ENCODE measurements at regions of chr5 and their contacts with region 1.

Region 1: GRCh38 chr5:131589510-131590348 is 45.3 kb downstream of the RAPGEF6 start:
- DNase-seq: peak; percentile 58 to 66
- H3K4me3 ChIP-seq: no peak overlapping the region
- H3K4me3 Mint-ChIP-seq: no peak overlapping the region
- H3K27ac Mint-ChIP-seq: peak overlapping the region; percentile 61
- H3K4me1 ChIP-seq: peaks cover 10% of the 10 kb centered on the region
- H3K4me1 Mint-ChIP-seq: peaks cover 18% of the 10 kb centered on the region
- H3K27me3 ChIP-seq: no peaks in the 10 kb centered on the region
- H3K27me3 Mint-ChIP-seq: no peaks in the 10 kb centered on the region
- CTCF ChIP-seq: peak; percentile 77 to 82

Region 2: DNA sequence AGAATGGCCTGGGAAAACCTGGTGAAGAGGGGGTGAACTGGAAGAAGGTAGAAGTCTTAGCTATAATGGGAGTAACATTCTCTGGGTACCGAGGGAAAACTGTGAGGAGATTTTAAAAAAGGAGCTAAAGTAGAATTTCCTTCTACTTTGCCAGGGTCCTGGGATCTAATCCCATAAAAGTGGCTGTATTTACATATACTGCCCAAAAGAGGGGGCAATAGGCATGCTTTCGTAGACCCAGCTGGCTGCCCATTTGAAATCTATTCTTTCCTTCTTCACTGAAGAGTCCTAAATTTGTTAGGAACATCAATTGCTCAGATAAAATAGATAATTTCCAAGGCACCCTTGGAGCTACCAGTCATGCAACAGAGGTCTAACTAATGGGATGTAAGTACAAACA is 166.7 kb before region 1 on chr5:
- CTCF ChIA-PET with region 1: interaction called, 4 read pairs
- POLR2A ChIA-PET with region 1: no interaction called
- intact Hi-C with region 1: loop called (anchors 1 kb)
- DNase-seq: peak in 1 of 2 experiments; percentile 19
- H3K4me3 ChIP-seq: no peak overlapping the region
- H3K4me3 Mint-ChIP-seq: no peak overlapping the region
- H3K27ac Mint-ChIP-seq: no peak overlapping the region
- H3K4me1 ChIP-seq: no peaks in the 10 kb centered on the region
- H3K4me1 Mint-ChIP-seq: no peaks in the 10 kb centered on the region
- H3K27me3 ChIP-seq: no peaks in the 10 kb centered on the region
- H3K27me3 Mint-ChIP-seq: no peaks in the 10 kb centered on the region
- CTCF ChIP-seq: peak; percentile 29 to 51

Region 3: GRCh38 chr5:131796793-131797693 is 207.3 kb after region 1 on chr5 and contains the start of gene FNIP1:
- CTCF ChIA-PET with region 1: interaction called, 12 read pairs
- POLR2A ChIA-PET with region 1: interaction called, 5 read pairs
- intact Hi-C with region 1: loop called (anchors 1 kb)
- DNase-seq: peak; percentile 100
- H3K4me3 ChIP-seq: peak within 1 kb of the TSS; percentile 94
- H3K4me3 Mint-ChIP-seq: peak within 1 kb of the TSS; percentile 95
- H3K27ac Mint-ChIP-seq: peak within 1 kb of the TSS; percentile 90
- H3K4me1 ChIP-seq: peaks cover 5% of the 10 kb centered on the region
- H3K4me1 Mint-ChIP-seq: peaks cover 7% of the 10 kb centered on the region
- H3K27me3 ChIP-seq: no peaks in the 10 kb centered on the region
- H3K27me3 Mint-ChIP-seq: peaks cover 6% of the 10 kb centered on the region
- CTCF ChIP-seq: peak in 1 of 2 experiments; percentile 30
- total RNA-seq, gene FNIP1: 42.7 and 45.0 TPM in 2 replicates

Measured in Caco-2 (cell line).